Motor neuron (in vitro differentiated cells): ENCODE measurements at regions of chr12 and their contacts with region 1.

Region 1: GRCh38 chr12:100554608-100555077 is 18.8 kb upstream of the GAS2L3 start:
- ATAC-seq: peak in 7 of 8 experiments; percentile 32 to 89 (median 79)
- H3K4me3 ChIP-seq: no peak overlapping the region
- H3K27ac ChIP-seq: no peak overlapping the region
- H3K4me1 ChIP-seq: no peaks in the 10 kb centered on the region

Region 2: GRCh38 chr12:100348657-100349454 is 205.8 kb before region 1 on chr12:
- in situ Hi-C with region 1: loop called in 6 of 9 experiments (anchors 5 to 25 kb)
- ATAC-seq: peak; percentile 32 to 79 (median 53)
- H3K4me3 ChIP-seq: no peak overlapping the region
- H3K27ac ChIP-seq: no peak overlapping the region
- H3K4me1 ChIP-seq: no peaks in the 10 kb centered on the region

Region 3: GRCh38 chr12:100391856-100392255 is 162.8 kb before region 1 on chr12:
- in situ Hi-C with region 1: loop called in 1 of 9 experiments (anchors 10 kb)
- ATAC-seq: peak in 2 of 8 experiments; percentile 33 to 47
- H3K4me3 ChIP-seq: no peak overlapping the region
- H3K27ac ChIP-seq: no peak overlapping the region
- H3K4me1 ChIP-seq: no peaks in the 10 kb centered on the region